SK-N-SH (cell line): ENCODE measurements at regions of chr15 and their contacts with region 1.

Region 1: GRCh38 chr15:41695750-41696426 is 35.7 kb downstream of the MGA start:
- DNase-seq: peak; percentile 48
- H3K4me3 ChIP-seq: no peak overlapping the region
- H3K27ac ChIP-seq: no peak overlapping the region
- H3K4me1 ChIP-seq: no peaks in the 10 kb centered on the region; a peak in 2 of 4 replicates
- H3K27me3 ChIP-seq: no peaks in the 10 kb centered on the region
- CTCF ChIP-seq: peak; percentile 52
- EP300 ChIP-seq: no peak
- RAD21 ChIP-seq: peak; percentile 57

Region 2: GRCh38 chr15:41713047-41713446 is 17.2 kb after region 1 on chr15:
- CTCF ChIA-PET with region 1: interaction called, 12 read pairs
- POLR2A ChIA-PET with region 1: no interaction called
- DNase-seq: no peak
- H3K4me3 ChIP-seq: no peak overlapping the region
- H3K27ac ChIP-seq: no peak overlapping the region
- H3K4me1 ChIP-seq: no peaks in the 10 kb centered on the region
- H3K27me3 ChIP-seq: no peaks in the 10 kb centered on the region
- CTCF ChIP-seq: no peak
- EP300 ChIP-seq: no peak
- RAD21 ChIP-seq: no peak